CD8-positive, alpha-beta T cell (primary cell): ENCODE measurements at regions of chr7 and their contacts with region 1.

Region 1: DNA sequence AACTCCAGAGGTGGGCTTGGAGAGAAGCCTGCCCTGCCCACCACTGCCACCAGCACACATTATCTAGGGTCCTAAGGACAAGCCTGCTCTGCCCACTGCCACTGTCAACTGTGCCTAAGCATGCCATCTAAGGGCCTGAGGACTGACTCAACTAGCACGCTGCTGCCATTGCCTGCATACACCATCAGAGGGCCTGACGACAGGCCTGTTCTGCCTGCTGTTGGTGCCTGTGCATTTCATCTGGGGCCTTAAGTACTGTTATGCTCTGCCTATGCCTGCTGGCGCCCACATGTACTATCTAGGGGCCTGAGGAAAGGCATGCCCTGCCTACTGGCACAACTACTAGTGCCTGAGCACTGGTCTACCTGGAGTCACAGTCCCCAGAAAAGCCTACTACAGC is 27.1 kb upstream of the LRRD1 start:
- DNase-seq: no peak
- ATAC-seq: no peak
- H3K4me3 ChIP-seq: no peak overlapping the region
- H3K4me3 Mint-ChIP-seq: no peak overlapping the region
- H3K27ac ChIP-seq: no peak overlapping the region
- H3K27ac Mint-ChIP-seq: no peak overlapping the region
- H3K4me1 ChIP-seq: no peaks in the 10 kb centered on the region
- H3K4me1 Mint-ChIP-seq: peaks cover 13% of the 10 kb centered on the region
- H3K27me3 ChIP-seq: no peaks in the 10 kb centered on the region
- H3K27me3 Mint-ChIP-seq: no peaks in the 10 kb centered on the region
- CTCF ChIP-seq: no peak

Region 2: DNA sequence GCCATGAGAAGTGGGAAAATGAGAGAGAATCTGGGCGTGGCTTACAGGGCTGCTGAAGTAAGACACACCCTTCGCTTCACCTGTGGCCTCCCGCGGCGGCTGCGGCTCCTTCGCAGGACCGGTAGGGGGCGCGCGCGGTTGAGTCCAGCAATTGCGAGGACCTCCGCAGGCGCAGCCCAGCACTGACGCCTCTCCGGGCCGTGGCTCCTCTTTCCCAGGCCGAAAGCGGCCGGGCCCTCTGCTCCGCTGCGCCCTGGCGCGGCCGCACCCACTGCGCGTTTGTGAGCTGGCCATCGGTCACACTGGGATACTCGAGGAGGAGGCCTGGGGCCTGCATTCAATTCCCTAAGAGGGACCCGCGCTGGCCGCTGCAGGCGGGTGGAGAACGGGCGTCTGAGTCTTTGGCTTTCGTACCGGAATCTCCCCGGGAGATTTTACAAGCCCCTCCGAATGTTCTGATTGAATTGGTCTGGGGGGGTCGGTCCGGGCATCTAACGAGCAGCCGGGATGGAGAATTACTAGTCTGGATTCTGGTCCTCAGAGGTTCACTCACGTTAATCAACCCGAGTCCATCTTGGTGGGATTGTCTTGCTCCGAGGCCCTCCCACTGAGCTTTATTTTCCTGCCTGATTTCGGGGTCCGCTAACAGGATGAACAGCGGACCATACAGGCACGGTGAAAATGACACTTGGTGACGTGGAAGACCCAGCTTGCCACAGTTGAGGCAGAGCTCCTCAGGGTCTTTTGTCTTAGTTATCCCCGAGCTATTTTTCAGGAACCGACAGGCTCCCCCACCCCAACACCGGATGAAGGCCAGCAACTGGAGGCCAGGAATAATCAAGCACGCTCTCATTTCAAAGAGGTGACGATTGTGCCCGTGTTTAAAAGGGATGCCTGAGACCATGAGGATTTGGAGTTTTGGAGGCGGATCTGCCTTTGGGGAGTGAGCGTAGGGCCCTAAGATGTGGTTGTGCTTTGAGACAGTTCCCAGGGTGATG is 26.8 kb before region 1 on chr7 and contains the start of gene LRRD1:
- CTCF ChIA-PET with region 1: interaction called, 5 read pairs
- POLR2A ChIA-PET with region 1: no interaction called
- intact Hi-C with region 1: loop called in 1 of 2 experiments (anchors 5 kb)
- DNase-seq: peak; percentile 81 to 95 (median 87)
- ATAC-seq: peak; percentile 100
- H3K4me3 ChIP-seq: peak within 1 kb of the TSS; percentile 58 to 64
- H3K4me3 Mint-ChIP-seq: peak within 1 kb of the TSS; percentile 82
- H3K27ac ChIP-seq: peak within 1 kb of the TSS in 1 of 2 experiments; percentile 24
- H3K27ac Mint-ChIP-seq: no peak within 1 kb of the TSS
- H3K4me1 ChIP-seq: peaks cover 3% of the 10 kb centered on the region
- H3K4me1 Mint-ChIP-seq: peaks cover 5% of the 10 kb centered on the region
- H3K27me3 ChIP-seq: no peaks in the 10 kb centered on the region
- H3K27me3 Mint-ChIP-seq: peaks cover 5% of the 10 kb centered on the region
- CTCF ChIP-seq: peak; percentile 97
- total RNA-seq, gene LRRD1: not detected